Aorta (tissue), 5 donors: ENCODE measurements at regions of chr15 and their contacts with region 1.

Region 1: GRCh38 chr15:31245135-31245689 is 81.4 kb upstream of the KLF13 start:
- DNase-seq: no peak
- ATAC-seq: no peak
- H3K4me3 ChIP-seq: no peak overlapping the region
- H3K27ac ChIP-seq: no peak overlapping the region
- H3K4me1 ChIP-seq: no peaks in the 10 kb centered on the region
- H3K27me3 ChIP-seq: no peaks in the 10 kb centered on the region

Region 2: GRCh38 chr15:31857194-31857593 is 612.0 kb after region 1 on chr15:
- intact Hi-C with region 1: loop called in 1 of 2 experiments (anchors 5 kb)
- DNase-seq: no peak
- ATAC-seq: no peak
- H3K4me3 ChIP-seq: no peak overlapping the region
- H3K27ac ChIP-seq: no peak overlapping the region
- H3K4me1 ChIP-seq: no peaks in the 10 kb centered on the region
- H3K27me3 ChIP-seq: no peaks in the 10 kb centered on the region